CD14-positive monocyte (primary cell): ENCODE measurements at regions of chr5 and their contacts with region 1.

Region 1: GRCh38 chr5:179697993-179698934 is 503 bp upstream of the CANX start:
- DNase-seq: peak; percentile 98 to 100 (median 99)
- H3K4me3 ChIP-seq: peak overlapping the region; percentile 55 to 91 (median 81)
- H3K4me3 Mint-ChIP-seq: peak overlapping the region; percentile 94 to 97
- H3K27ac ChIP-seq: peak overlapping the region; percentile 99
- H3K27ac Mint-ChIP-seq: peak overlapping the region; percentile 96 to 100 (median 100)
- H3K4me1 ChIP-seq: peaks cover 50 to 73% of the 10 kb centered on the region in 2 donors
- H3K4me1 Mint-ChIP-seq: peaks cover 54% of the 10 kb centered on the region
- H3K27me3 ChIP-seq: no peaks in the 10 kb centered on the region
- H3K27me3 Mint-ChIP-seq: peaks cover 0 to 2% (median 0%) of the 10 kb centered on the region in 3 donors
- CTCF ChIP-seq: no peak

Region 2: GRCh38 chr5:179125789-179126505 is 572.3 kb before region 1 on chr5:
- intact Hi-C with region 1: no loop called
- DNase-seq: no peak
- H3K4me3 ChIP-seq: no peak overlapping the region
- H3K4me3 Mint-ChIP-seq: no peak overlapping the region
- H3K27ac ChIP-seq: no peak overlapping the region
- H3K27ac Mint-ChIP-seq: no peak overlapping the region
- H3K4me1 ChIP-seq: no peaks in the 10 kb centered on the region
- H3K4me1 Mint-ChIP-seq: no peaks in the 10 kb centered on the region
- H3K27me3 ChIP-seq: no peaks in the 10 kb centered on the region
- H3K27me3 Mint-ChIP-seq: peaks cover 0 to 4% (median 0%) of the 10 kb centered on the region in 3 donors
- CTCF ChIP-seq: no peak

Region 3: GRCh38 chr5:179668391-179668790 is 29.9 kb before region 1 on chr5:
- intact Hi-C with region 1: no loop called
- DNase-seq: peak; percentile 41 to 62 (median 61)
- H3K4me3 ChIP-seq: no peak overlapping the region
- H3K4me3 Mint-ChIP-seq: no peak overlapping the region
- H3K27ac ChIP-seq: no peak overlapping the region
- H3K27ac Mint-ChIP-seq: peak overlapping the region in 2 of 7 donors; percentile 10 to 63
- H3K4me1 ChIP-seq: no peaks in the 10 kb centered on the region
- H3K4me1 Mint-ChIP-seq: peaks cover 7% of the 10 kb centered on the region
- H3K27me3 ChIP-seq: no peaks in the 10 kb centered on the region
- H3K27me3 Mint-ChIP-seq: peaks cover 0 to 7% (median 0%) of the 10 kb centered on the region in 3 donors
- CTCF ChIP-seq: peak; percentile 83

Region 4: GRCh38 chr5:179678223-179679013 is 19.8 kb before region 1 on chr5:
- intact Hi-C with region 1: loop called in 1 of 2 experiments (anchors 2 kb)
- DNase-seq: peak; percentile 95 to 98 (median 97)
- H3K4me3 ChIP-seq: peak overlapping the region; percentile 60 to 96 (median 76)
- H3K4me3 Mint-ChIP-seq: peak overlapping the region; percentile 94 to 95
- H3K27ac ChIP-seq: peak overlapping the region; percentile 60 to 93
- H3K27ac Mint-ChIP-seq: peak overlapping the region; percentile 85 to 97 (median 93)
- H3K4me1 ChIP-seq: peaks cover 30 to 32% of the 10 kb centered on the region in 2 donors
- H3K4me1 Mint-ChIP-seq: peaks cover 34% of the 10 kb centered on the region
- H3K27me3 ChIP-seq: no peaks in the 10 kb centered on the region
- H3K27me3 Mint-ChIP-seq: peaks cover 1 to 8% (median 3%) of the 10 kb centered on the region in 3 donors
- CTCF ChIP-seq: no peak

Region 5: GRCh38 chr5:179732417-179732917 is 34.2 kb after region 1 on chr5 and contains the start of gene MAML1:
- intact Hi-C with region 1: loop called (anchors 2 kb)
- DNase-seq: peak; percentile 99 to 100 (median 100)
- H3K4me3 ChIP-seq: peak within 1 kb of the TSS; percentile 69 to 90 (median 70)
- H3K4me3 Mint-ChIP-seq: peak within 1 kb of the TSS; percentile 92 to 96
- H3K27ac ChIP-seq: peak within 1 kb of the TSS; percentile 97 to 98
- H3K27ac Mint-ChIP-seq: peak within 1 kb of the TSS; percentile 95 to 99 (median 97)
- H3K4me1 ChIP-seq: peaks cover 39 to 60% of the 10 kb centered on the region in 2 donors
- H3K4me1 Mint-ChIP-seq: peaks cover 58% of the 10 kb centered on the region
- H3K27me3 ChIP-seq: no peaks in the 10 kb centered on the region
- H3K27me3 Mint-ChIP-seq: no peaks in the 10 kb centered on the region
- CTCF ChIP-seq: no peak
- polyA plus RNA-seq, gene MAML1: 2.2 to 11.0 (median 2.7) TPM

Region 6: GRCh38 chr5:179821581-179822432 is 123.5 kb after region 1 on chr5:
- intact Hi-C with region 1: loop called in 1 of 2 experiments (anchors 1 kb)
- DNase-seq: peak; percentile 79 to 90 (median 86)
- H3K4me3 ChIP-seq: peak overlapping the region; percentile 87 to 99 (median 87)
- H3K4me3 Mint-ChIP-seq: peak overlapping the region; percentile 93 to 94
- H3K27ac ChIP-seq: peak overlapping the region; percentile 90 to 98
- H3K27ac Mint-ChIP-seq: peak overlapping the region; percentile 96 to 99 (median 98)
- H3K4me1 ChIP-seq: peaks cover 49 to 68% of the 10 kb centered on the region in 2 donors
- H3K4me1 Mint-ChIP-seq: peaks cover 65% of the 10 kb centered on the region
- H3K27me3 ChIP-seq: no peaks in the 10 kb centered on the region
- H3K27me3 Mint-ChIP-seq: peaks cover 6 to 10% (median 7%) of the 10 kb centered on the region in 3 donors
- CTCF ChIP-seq: no peak